ENCODE measurements at regions of chr22 and their contacts with region 1.

Region 1: DNA sequence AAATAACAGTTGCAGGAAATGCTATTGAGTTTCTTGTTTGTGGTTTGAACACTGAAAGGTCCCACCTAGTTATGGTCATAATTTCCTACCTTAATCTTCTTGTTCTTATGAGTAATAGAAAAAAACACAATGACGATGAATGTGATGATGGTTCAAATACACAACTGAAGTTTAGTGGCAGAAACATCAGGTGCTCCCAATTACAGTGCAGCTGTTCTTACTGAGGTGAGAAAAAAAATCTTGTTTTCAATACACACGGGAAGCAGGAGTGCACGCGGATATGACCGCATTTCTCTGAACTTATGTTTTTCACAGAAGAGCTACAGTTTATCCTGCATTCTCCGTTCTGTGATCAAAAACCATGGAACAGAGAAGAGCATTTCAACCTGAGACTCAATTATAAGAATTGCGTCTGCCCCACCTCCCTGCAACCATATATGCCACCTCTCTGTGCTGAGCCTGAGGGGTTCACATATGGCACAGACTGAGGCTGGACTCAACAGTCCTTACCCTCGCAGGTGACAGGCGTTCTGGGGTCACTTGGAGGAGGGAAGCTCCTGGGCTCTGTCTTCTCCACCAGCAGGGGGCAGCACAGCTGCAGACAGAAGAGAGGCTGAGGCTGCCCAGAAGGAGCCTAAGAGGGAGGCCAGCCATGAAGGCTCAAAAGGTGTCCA is 99.7 kb upstream of the IGLL5 start:
- DNase-seq: peak; percentile 53 to 86 (median 65)
- ATAC-seq: peak; percentile 77
- H3K4me3 ChIP-seq: no peak overlapping the region
- H3K4me3 Mint-ChIP-seq: peak overlapping the region; percentile 18
- H3K27ac ChIP-seq: peak overlapping the region in 1 of 2 donors; percentile 71
- H3K27ac Mint-ChIP-seq: peak overlapping the region; percentile 85
- H3K4me1 ChIP-seq: peaks cover 71% of the 10 kb centered on the region
- H3K4me1 Mint-ChIP-seq: peaks cover 55% of the 10 kb centered on the region
- H3K27me3 ChIP-seq: no peaks in the 10 kb centered on the region
- H3K27me3 Mint-ChIP-seq: no peaks in the 10 kb centered on the region
- CTCF ChIP-seq: peak; percentile 84

Region 2: DNA sequence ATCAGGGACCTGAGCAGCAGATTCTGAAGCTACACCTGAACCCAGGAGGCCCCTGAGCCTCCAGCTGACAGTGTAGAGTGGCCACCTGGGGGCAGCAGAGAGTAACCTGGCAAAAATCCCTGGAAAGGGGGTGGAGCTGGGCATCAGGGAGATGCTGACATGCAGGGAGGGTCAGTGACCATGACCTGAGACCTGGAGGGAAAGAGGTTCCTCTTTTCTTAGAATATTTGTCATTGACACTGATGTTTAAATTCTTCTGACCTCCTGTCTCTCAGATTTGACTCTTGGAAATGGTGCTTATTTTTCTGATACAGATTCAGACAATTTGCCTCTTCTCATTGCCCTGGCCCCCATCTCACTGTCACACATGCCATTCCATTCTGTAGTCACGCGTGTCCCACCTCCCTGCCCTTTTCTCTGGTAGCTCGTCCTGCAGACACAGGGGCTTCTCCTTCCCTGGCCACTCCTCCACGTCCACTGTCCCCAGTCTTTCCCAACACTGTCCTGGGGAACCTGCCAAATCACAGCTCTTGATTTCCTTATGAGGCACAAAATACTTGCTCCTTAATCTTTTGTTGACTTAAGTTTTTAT is 17.5 kb before region 1 on chr22:
- CTCF ChIA-PET with region 1: interaction called, 14 read pairs
- POLR2A ChIA-PET with region 1: interaction called, 7 read pairs
- intact Hi-C with region 1: no loop called
- DNase-seq: peak in 12 of 14 experiments; percentile 19 to 69 (median 36)
- ATAC-seq: peak; percentile 54
- H3K4me3 ChIP-seq: no peak overlapping the region
- H3K4me3 Mint-ChIP-seq: no peak overlapping the region
- H3K27ac ChIP-seq: no peak overlapping the region
- H3K27ac Mint-ChIP-seq: no peak overlapping the region
- H3K4me1 ChIP-seq: peaks cover 21% of the 10 kb centered on the region
- H3K4me1 Mint-ChIP-seq: no peaks in the 10 kb centered on the region
- H3K27me3 ChIP-seq: no peaks in the 10 kb centered on the region
- H3K27me3 Mint-ChIP-seq: peaks cover 12% of the 10 kb centered on the region
- CTCF ChIP-seq: peak; percentile 75

Region 3: DNA sequence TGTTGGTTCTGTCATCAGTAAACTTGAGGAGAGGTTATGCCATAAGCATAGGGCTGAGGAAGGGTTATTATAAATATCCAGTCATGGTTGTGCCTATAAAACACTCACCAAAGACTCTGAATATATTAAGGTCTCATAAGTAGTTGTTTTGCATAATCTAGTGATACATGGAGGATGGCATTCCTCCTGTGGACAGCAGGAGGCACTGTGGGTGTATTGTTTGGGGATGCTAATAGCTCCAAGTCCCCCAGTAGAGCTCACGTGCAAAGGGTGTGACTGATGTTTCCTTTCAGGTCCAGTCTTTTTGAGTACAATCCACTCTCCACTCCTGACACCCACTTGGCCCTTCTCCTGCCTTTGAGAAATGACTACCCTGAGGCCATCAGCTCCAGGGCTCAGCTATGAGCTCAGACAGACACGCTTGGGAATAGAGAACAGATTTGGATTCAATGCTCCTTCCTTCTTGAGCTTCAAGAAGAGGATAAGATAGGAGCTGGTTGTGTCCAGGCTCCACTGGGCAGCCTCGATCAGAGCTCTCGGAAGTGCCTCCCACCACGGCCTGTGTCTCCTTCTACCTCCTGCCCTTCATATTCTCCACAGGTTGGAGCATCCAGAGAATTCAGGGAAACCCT is 14.5 kb after region 1 on chr22:
- CTCF ChIA-PET with region 1: interaction called, 8 read pairs
- POLR2A ChIA-PET with region 1: interaction called, 10 read pairs
- intact Hi-C with region 1: no loop called
- DNase-seq: peak in 10 of 14 experiments; percentile 38 to 81 (median 57)
- ATAC-seq: peak; percentile 72
- H3K4me3 ChIP-seq: no peak overlapping the region
- H3K4me3 Mint-ChIP-seq: no peak overlapping the region
- H3K27ac ChIP-seq: no peak overlapping the region
- H3K27ac Mint-ChIP-seq: no peak overlapping the region
- H3K4me1 ChIP-seq: peaks cover 25% of the 10 kb centered on the region
- H3K4me1 Mint-ChIP-seq: peaks cover 55% of the 10 kb centered on the region
- H3K27me3 ChIP-seq: peaks cover 0 to 2% of the 10 kb centered on the region in 2 experiments
- H3K27me3 Mint-ChIP-seq: no peaks in the 10 kb centered on the region
- CTCF ChIP-seq: peak; percentile 83

Region 4: DNA sequence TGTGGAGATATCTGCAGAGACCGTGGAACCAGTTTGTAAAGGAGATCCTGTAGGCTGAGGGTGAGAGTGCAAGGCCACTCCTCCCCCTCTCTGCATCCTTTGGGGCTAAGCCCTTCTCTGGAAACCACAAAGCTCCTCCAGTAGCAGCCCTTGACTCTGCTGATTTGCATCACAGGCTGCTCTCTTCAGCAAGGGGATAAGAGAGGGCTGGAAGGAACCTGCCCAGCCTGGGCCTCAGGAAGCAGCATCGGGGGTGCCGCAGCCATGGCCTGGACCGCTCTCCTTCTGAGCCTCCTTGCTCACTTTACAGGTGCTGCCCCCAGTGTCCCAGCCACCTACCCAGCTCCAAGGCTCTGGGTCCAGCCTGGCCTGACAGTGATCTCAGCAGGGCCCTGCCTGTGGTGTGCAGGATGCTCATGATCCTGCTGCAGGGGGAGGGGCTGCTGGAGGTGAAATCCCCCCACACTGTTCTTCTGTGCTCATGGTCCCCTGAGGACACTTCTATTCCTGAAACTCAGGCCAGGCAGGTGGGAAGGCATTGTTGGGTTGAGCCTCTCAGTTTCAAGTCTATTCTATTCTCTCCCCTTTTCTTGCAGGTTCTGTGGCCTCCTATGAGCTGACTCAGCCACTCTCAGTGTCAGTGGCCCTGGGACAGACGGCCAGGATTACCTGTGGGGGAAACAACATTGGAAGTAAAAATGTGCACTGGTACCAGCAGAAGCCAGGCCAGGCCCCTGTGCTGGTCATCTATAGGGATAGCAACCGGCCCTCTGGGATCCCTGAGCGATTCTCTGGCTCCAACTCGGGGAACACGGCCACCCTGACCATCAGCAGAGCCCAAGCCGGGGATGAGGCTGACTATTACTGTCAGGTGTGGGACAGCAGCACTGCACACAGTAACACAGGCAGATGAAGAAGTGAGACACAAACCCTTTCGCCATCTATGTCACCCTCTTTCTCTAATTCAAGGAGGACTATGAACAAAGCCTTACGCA is 31.2 kb after region 1 on chr22:
- CTCF ChIA-PET with region 1: interaction called, 3 read pairs
- POLR2A ChIA-PET with region 1: interaction called, 12 read pairs
- intact Hi-C with region 1: loop called in 1 of 2 experiments (anchors 2 kb)
- DNase-seq: peak in 7 of 14 experiments; percentile 29 to 87 (median 58)
- ATAC-seq: peak; percentile 54
- H3K4me3 ChIP-seq: peak overlapping the region; percentile 54
- H3K4me3 Mint-ChIP-seq: peak overlapping the region; percentile 71
- H3K27ac ChIP-seq: peak overlapping the region; percentile 68 to 83
- H3K27ac Mint-ChIP-seq: peak overlapping the region; percentile 97
- H3K4me1 ChIP-seq: peaks cover 95% of the 10 kb centered on the region
- H3K4me1 Mint-ChIP-seq: peaks cover 99% of the 10 kb centered on the region
- H3K27me3 ChIP-seq: no peaks in the 10 kb centered on the region
- H3K27me3 Mint-ChIP-seq: no peaks in the 10 kb centered on the region
- CTCF ChIP-seq: no peak

Region 5: GRCh38 chr22:22848364-22848866 is 60.5 kb after region 1 on chr22:
- CTCF ChIA-PET with region 1: interaction called, 11 read pairs
- POLR2A ChIA-PET with region 1: interaction called, 3 read pairs
- intact Hi-C with region 1: no loop called
- DNase-seq: peak; percentile 53 to 84 (median 63)
- ATAC-seq: peak; percentile 80
- H3K4me3 ChIP-seq: no peak overlapping the region
- H3K4me3 Mint-ChIP-seq: no peak overlapping the region
- H3K27ac ChIP-seq: no peak overlapping the region
- H3K27ac Mint-ChIP-seq: no peak overlapping the region
- H3K4me1 ChIP-seq: peaks cover 22% of the 10 kb centered on the region
- H3K4me1 Mint-ChIP-seq: peaks cover 64% of the 10 kb centered on the region
- H3K27me3 ChIP-seq: no peaks in the 10 kb centered on the region
- H3K27me3 Mint-ChIP-seq: no peaks in the 10 kb centered on the region
- CTCF ChIP-seq: peak; percentile 98

Region 6: DNA sequence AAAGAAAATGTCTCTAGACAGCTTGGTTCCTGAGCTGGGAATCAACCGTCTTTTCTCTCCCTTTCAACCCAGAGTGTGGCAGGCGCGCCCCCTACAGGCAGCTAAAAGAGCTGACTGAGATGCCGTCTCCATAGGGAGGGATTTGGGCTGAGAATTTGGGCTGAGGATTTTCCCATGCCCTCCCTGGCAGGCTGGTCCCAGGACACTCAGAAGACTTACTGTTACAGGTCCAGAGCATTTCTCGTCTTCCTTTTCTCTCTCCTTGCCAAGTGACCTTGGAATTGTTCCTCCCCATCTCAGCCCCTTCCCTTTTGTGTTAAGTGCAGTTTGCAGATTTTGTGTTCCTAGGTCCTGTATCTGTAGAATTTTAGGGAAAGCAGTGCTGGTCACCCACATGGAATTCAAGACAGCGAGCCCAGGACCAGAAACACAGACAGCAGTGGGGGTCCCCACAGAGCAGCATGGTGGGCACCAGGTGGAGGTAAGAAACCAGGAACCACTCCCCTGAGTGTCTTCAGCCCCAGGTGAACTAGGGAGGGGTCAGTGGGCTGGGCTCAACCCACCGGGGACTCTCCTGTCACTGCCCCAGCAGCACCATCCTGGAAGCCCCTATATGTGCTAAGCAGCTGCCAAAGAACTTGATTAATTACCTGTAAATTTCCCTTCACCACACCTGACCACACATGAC is 89.7 kb after region 1 on chr22:
- CTCF ChIA-PET with region 1: interaction called, 21 read pairs
- POLR2A ChIA-PET with region 1: interaction called, 12 read pairs
- intact Hi-C with region 1: loop called (anchors 1 to 5 kb)
- DNase-seq: peak; percentile 65 to 89 (median 75)
- ATAC-seq: peak; percentile 67
- H3K4me3 ChIP-seq: no peak overlapping the region
- H3K4me3 Mint-ChIP-seq: no peak overlapping the region
- H3K27ac ChIP-seq: no peak overlapping the region
- H3K27ac Mint-ChIP-seq: no peak overlapping the region
- H3K4me1 ChIP-seq: peaks cover 3% of the 10 kb centered on the region
- H3K4me1 Mint-ChIP-seq: no peaks in the 10 kb centered on the region
- H3K27me3 ChIP-seq: no peaks in the 10 kb centered on the region
- H3K27me3 Mint-ChIP-seq: no peaks in the 10 kb centered on the region
- CTCF ChIP-seq: peak; percentile 84

Region 7: DNA sequence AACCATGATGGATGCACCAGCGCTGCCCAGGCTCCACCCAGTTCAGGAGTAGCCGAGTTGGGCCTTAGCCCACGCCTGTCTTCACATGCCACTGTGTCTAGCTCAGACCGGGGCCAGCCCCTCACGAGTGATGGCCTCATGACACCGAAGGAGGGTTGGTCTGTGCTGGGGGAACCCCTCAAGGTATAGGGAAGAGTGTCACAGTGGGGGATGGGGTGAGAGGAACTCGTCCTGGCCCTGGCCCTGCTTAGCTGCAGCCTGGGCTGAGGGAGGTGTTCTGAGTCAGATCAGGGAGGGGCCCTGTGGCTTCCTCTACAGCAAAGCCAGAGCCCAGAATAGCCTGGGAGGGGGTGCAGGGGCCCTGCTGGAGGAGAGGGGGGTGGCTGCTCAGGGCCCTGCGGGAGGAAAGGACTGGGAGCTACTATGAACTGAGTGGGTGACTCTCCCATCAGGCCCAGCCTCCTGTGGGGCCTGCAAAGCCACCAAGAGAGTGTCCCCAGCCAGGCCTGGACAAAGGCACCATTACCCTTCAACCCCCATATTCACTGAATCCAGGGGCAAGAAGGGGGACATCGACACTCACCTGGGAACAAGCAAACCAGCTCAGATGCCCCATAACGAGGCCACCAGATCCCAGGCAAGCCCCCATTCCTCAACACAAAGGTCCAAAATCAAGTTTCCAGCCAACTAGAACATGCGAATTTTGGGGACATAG is 140.9 kb after region 1 on chr22:
- CTCF ChIA-PET with region 1: no interaction called
- POLR2A ChIA-PET with region 1: no interaction called
- intact Hi-C with region 1: no loop called
- DNase-seq: peak in 13 of 14 experiments; percentile 4 to 86 (median 19)
- ATAC-seq: peak; percentile 84
- H3K4me3 ChIP-seq: no peak overlapping the region
- H3K4me3 Mint-ChIP-seq: no peak overlapping the region
- H3K27ac ChIP-seq: peak overlapping the region in 1 of 2 donors; percentile 22
- H3K27ac Mint-ChIP-seq: no peak overlapping the region
- H3K4me1 ChIP-seq: peaks cover 45% of the 10 kb centered on the region
- H3K4me1 Mint-ChIP-seq: peaks cover 10% of the 10 kb centered on the region
- H3K27me3 ChIP-seq: no peaks in the 10 kb centered on the region
- H3K27me3 Mint-ChIP-seq: no peaks in the 10 kb centered on the region
- CTCF ChIP-seq: no peak

Region 8: GRCh38 chr22:22942511-22943329 is 154.8 kb after region 1 on chr22:
- CTCF ChIA-PET with region 1: no interaction called
- POLR2A ChIA-PET with region 1: no interaction called
- intact Hi-C with region 1: loop called in 1 of 2 experiments (anchors 5 kb)
- DNase-seq: peak; percentile 53 to 84 (median 70)
- ATAC-seq: peak; percentile 82
- H3K4me3 ChIP-seq: no peak overlapping the region
- H3K4me3 Mint-ChIP-seq: no peak overlapping the region
- H3K27ac ChIP-seq: no peak overlapping the region
- H3K27ac Mint-ChIP-seq: no peak overlapping the region
- H3K4me1 ChIP-seq: peaks cover 7% of the 10 kb centered on the region
- H3K4me1 Mint-ChIP-seq: no peaks in the 10 kb centered on the region
- H3K27me3 ChIP-seq: no peaks in the 10 kb centered on the region
- H3K27me3 Mint-ChIP-seq: no peaks in the 10 kb centered on the region
- CTCF ChIP-seq: peak; percentile 82

Measured in CD4-positive, alpha-beta T cell (primary cell).